ENCODE measurements at regions of chr7 and their contacts with region 1.

Region 1: DNA sequence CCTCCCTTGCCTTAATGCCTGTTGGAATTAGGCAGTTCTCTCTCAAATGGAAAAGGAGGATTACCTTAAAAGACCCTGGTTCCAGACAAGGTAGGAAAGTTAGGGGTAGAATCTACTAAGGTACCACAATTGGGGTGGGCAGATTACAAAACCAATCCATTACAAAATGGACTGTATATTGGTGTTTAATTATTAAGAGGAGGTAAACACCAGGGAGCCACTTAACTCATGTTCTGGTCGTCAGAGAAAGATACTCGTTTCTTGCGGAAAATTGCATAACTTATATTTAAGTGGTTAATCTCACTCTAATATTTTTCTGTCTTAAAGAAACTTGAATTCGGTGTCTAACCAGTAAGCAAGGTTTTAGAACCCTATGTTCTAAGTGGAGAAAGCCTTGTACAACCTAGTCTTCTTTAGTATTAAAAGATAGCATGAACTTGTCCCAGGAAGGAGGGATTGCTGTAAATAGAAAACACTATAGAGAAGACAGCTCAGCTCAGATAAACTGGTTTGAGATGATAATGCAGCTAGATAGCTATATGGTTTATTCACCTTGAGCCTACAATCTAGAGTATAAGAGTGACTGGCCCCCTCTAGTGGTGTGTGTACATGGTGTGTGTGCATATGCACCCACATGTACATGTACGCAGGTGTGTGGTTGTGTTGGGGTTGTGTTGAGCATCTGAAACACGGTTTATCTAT is 58.0 kb upstream of the STRIP2 start:
- DNase-seq: peak in 17 of 42 donors; percentile 20 to 69 (median 35)

Region 2: GRCh38 chr7:129454249-129454551 is 78.0 kb after region 1 on chr7:
- intact Hi-C with region 1: loop called (anchors 10 kb)
- DNase-seq: no peak